ENCODE measurements at regions of chr15 and their contacts with region 1.

Region 1: DNA sequence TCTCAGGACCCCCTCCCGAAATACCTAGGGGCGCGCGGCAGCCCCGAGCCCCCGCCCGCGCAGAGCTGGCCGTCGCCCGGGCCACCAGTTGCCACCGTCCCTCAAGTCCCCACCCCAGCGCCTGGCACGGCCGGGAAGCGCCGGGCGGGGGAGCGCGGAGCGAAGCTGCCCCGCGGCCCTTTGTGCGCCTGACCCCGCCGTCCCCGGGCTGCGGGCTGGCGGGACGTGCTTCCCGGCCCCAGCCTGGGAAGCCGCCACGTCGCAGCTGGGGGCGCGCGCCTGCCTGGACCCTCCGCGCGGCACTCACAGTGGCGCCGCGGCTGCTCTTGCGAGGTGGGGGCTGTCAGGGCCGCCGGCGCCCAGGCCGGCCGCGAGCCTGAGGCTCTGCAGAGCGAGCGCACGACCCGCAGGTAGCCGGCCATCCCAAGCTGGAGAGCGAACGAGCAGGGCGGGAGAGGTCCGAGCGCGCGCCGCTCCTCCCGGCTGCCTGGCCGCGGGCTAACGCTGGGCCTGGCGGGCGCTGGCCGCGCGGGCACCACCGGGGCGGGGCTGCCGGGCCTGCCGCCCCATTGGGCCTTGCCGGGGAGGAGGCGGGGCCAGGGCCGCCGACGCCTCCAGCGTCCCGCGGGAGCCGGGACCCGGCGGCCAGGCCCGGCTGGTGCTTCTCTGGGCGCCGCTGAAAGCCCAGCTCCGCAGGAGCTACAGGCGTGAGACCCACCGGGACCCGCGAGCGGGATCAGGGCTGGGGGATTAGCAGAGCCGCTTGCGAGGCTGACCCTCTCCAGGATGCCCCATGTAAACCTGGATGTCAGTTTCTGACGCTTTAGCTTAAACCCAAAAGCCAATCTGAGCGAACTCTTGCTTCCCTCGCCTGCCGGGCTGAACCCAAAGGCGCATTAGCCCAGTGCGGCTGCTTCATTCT is at the start of gene IDH2:
- DNase-seq: peak; percentile 61 to 79
- ATAC-seq: peak; percentile 36 to 47
- H3K4me3 ChIP-seq: peak within 1 kb of the TSS; percentile 68 to 93 (median 80)
- H3K27ac ChIP-seq: peak within 1 kb of the TSS; percentile 94 to 100 (median 99)
- H3K4me1 ChIP-seq: peaks cover 74 to 80% of the 10 kb centered on the region in 2 donors
- H3K27me3 ChIP-seq: no peaks in the 10 kb centered on the region
- CTCF ChIP-seq: peak in 2 of 5 experiments; percentile 17 to 27
- POLR2A ChIP-seq: peak; percentile 99
- total RNA-seq, gene IDH2: 349 to 547 (median 423) TPM

Region 2: DNA sequence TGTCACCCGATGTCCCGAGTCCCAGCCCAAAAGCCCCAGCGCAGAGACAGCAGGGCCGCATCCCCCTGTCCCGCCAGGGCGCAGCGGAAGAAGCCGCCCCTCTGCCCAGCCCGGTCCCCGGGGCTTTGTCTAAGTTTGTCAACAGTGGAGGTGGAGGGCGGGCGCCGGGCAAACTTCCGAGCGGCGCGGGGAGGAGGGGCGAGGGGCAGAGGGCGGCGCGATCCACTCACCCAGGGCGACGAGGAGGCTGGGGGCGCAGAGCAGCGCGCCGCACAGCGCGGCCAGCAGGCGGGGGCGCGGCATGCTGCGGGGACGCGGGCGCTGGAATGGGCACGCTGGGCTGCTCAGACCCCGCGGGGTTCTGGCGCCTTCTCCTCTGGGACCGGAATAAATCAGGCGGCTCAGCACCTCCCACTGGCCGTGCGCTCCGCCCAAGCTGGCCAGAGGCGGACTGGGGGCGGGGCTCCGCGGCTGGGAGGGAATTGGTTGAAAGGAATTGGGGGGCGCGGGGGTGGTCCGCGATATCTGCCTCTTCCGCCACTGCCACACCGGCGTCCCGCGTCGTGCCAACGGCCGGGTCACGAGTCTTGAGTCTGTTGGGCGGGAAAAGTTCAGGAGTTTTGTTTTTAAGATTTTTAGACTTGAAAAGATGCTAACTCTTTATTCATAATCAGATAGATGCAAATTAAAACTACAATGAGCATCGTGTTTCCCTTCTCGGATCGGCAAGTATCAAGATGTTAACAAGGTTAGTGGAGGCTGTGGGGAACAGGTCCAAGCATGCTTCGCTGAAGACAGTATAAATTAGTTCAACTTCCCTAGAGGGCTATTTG is 1189.0 kb before region 1 on chr15 and contains the start of gene MFGE8:
- in situ Hi-C with region 1: no loop called
- intact Hi-C with region 1: loop called (anchors 5 kb)
- DNase-seq: peak; percentile 74 to 86
- ATAC-seq: peak; percentile 58 to 60
- H3K4me3 ChIP-seq: peak within 1 kb of the TSS; percentile 70 to 92 (median 86)
- H3K27ac ChIP-seq: peak within 1 kb of the TSS; percentile 92 to 99 (median 97)
- H3K4me1 ChIP-seq: peaks cover 40 to 42% of the 10 kb centered on the region in 2 donors
- H3K27me3 ChIP-seq: no peaks in the 10 kb centered on the region
- CTCF ChIP-seq: peak in 2 of 5 experiments; percentile 25 to 35
- POLR2A ChIP-seq: peak; percentile 99
- total RNA-seq, gene MFGE8: 239 to 437 (median 395) TPM

Region 3: GRCh38 chr15:90001683-90002427 is 100.4 kb before region 1 on chr15:
- in situ Hi-C with region 1: no loop called
- intact Hi-C with region 1: loop called (anchors 5 kb)
- DNase-seq: peak; percentile 36 to 62
- ATAC-seq: peak; percentile 45 to 52
- H3K4me3 ChIP-seq: peak overlapping the region; percentile 63 to 80 (median 66)
- H3K27ac ChIP-seq: peak overlapping the region; percentile 78 to 87 (median 82)
- H3K4me1 ChIP-seq: peaks cover 36 to 42% of the 10 kb centered on the region in 2 donors
- H3K27me3 ChIP-seq: no peaks in the 10 kb centered on the region
- CTCF ChIP-seq: no peak
- POLR2A ChIP-seq: peak; percentile 20 to 54

Region 4: GRCh38 chr15:90126457-90127435 is 24.5 kb after region 1 on chr15:
- in situ Hi-C with region 1: no loop called
- intact Hi-C with region 1: loop called (anchors 2 kb)
- DNase-seq: peak; percentile 10 to 78
- ATAC-seq: peak; percentile 92
- H3K4me3 ChIP-seq: no peak overlapping the region
- H3K27ac ChIP-seq: peak overlapping the region; percentile 68 to 81 (median 74)
- H3K4me1 ChIP-seq: peaks cover 8 to 18% of the 10 kb centered on the region in 2 donors
- H3K27me3 ChIP-seq: no peaks in the 10 kb centered on the region
- CTCF ChIP-seq: no peak
- POLR2A ChIP-seq: no peak

Region 5: DNA sequence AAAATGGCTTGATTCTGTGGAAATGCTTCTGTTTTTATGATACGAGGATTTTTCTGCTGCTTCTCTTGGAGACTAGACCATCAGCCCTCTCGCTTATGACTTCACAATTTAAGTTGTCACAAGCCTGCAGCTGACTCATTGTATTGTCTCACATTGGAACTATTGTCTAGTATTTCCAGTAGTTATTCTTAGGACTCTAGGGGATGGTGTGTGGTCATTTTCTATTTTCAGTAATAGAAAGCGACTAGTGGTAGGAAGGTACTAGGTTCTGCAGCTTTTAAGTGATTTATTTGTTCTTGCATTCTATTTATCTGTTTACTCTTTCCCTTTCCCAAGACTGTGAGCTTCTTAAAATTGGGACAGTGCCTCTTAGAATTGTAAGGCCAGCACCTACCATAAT is 361.2 kb after region 1 on chr15:
- in situ Hi-C with region 1: no loop called
- intact Hi-C with region 1: loop called (anchors 10 kb)
- DNase-seq: peak; percentile 44 to 57
- ATAC-seq: peak; percentile 91 to 92
- H3K4me3 ChIP-seq: peak overlapping the region in 1 of 4 donors; percentile 3
- H3K27ac ChIP-seq: peak overlapping the region; percentile 84 to 89 (median 86)
- H3K4me1 ChIP-seq: peaks cover 65 to 70% of the 10 kb centered on the region in 2 donors
- H3K27me3 ChIP-seq: no peaks in the 10 kb centered on the region
- CTCF ChIP-seq: peak; percentile 19 to 54 (median 43)
- POLR2A ChIP-seq: peak in 1 of 2 donors; percentile 54

Region 6: GRCh38 chr15:90512981-90513380 is 410.8 kb after region 1 on chr15:
- in situ Hi-C with region 1: no loop called
- intact Hi-C with region 1: no loop called
- DNase-seq: no peak
- ATAC-seq: no peak
- H3K4me3 ChIP-seq: no peak overlapping the region
- H3K27ac ChIP-seq: no peak overlapping the region
- H3K4me1 ChIP-seq: no peaks in the 10 kb centered on the region
- H3K27me3 ChIP-seq: no peaks in the 10 kb centered on the region
- CTCF ChIP-seq: no peak
- POLR2A ChIP-seq: no peak

Region 7: DNA sequence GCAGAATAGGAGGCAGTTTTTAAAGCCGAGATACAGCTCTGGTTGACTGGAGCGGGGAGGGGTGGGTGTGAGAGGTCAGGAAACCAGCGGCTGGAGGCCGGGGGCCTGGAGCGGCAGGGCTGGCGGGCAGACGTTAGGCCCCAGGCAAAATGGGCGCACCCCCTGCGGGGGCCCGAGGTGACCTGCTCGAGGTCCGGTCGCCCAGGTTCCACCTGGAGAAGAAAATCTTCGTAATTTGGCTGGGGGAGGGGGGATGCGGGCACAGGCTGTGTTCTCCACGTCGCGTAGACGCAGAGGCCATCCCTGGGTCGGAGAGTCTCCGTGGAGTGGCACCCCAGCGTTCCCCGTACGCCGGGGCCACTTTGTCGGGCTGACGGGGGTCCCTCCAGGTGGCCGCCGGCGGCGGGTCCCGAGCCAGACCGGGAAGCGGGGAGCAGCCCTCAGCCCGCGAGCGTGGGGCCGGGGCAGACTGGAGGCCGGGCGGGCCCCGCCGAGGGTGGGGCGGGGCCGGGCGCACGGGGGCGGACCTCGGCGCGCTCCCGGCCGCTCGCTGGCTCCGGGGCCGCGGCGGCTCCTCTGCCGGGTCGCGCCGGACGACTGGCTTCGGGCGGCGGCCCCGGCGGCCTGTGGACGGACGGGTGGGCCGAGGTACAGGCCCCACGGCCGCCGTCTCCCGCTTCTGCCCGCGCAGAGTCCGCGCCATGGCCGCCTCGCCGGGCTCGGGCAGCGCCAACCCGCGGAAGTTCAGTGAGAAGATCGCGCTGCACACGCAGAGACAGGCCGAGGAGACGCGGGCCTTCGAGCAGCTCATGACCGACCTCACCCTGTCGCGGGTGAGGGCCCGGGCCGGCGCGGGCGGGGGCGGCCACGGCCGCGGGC is 427.4 kb after region 1 on chr15 and contains the start of gene CRTC3:
- in situ Hi-C with region 1: no loop called
- intact Hi-C with region 1: no loop called
- DNase-seq: peak; percentile 14 to 39
- ATAC-seq: peak; percentile 79 to 80
- H3K4me3 ChIP-seq: peak within 1 kb of the TSS; percentile 73 to 98 (median 83)
- H3K27ac ChIP-seq: peak within 1 kb of the TSS; percentile 76 to 94 (median 90)
- H3K4me1 ChIP-seq: peaks cover 17 to 20% of the 10 kb centered on the region in 2 donors
- H3K27me3 ChIP-seq: no peaks in the 10 kb centered on the region
- CTCF ChIP-seq: peak in 2 of 5 experiments; percentile 12 to 19
- POLR2A ChIP-seq: peak; percentile 62 to 66
- total RNA-seq, gene CRTC3: 20.7 to 41.4 (median 30.5) TPM

Region 8: DNA sequence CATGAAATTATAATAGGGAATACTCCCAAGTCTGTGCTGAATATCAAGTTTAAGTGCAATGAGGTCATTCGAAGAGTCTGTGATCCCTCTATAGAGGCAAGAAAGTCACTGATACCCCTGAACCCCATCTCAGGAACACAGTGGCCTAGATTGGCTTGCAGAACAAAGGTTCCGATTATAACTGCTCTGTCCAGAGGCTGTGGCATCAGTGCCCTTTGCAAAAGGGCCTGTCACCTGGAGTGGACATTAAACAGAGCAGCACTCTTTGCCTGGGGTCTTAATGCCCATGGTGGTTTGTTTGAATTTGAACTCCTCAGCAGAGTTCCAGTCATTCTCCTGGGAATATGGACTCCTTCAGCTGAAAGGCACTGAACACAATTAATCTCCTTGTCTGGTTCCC is 1657.3 kb after region 1 on chr15:
- in situ Hi-C with region 1: no loop called
- intact Hi-C with region 1: no loop called
- DNase-seq: no peak
- ATAC-seq: no peak
- H3K4me3 ChIP-seq: no peak overlapping the region
- H3K27ac ChIP-seq: no peak overlapping the region
- H3K4me1 ChIP-seq: no peaks in the 10 kb centered on the region
- H3K27me3 ChIP-seq: no peaks in the 10 kb centered on the region
- CTCF ChIP-seq: no peak
- POLR2A ChIP-seq: no peak